GM10248 (cell line): ENCODE measurements at regions of chr6 and their contacts with region 1.

Region 1: GRCh38 chr6:110528101-110528929 is 51.9 kb upstream of the SLC22A16 start:
- DNase-seq: peak; percentile 62
- CTCF ChIP-seq: peak; percentile 75

Region 2: GRCh38 chr6:110561008-110561396 is 32.7 kb after region 1 on chr6:
- CTCF ChIA-PET with region 1: no interaction called
- POLR2A ChIA-PET with region 1: no interaction called
- DNase-seq: no peak
- CTCF ChIP-seq: no peak

Region 3: GRCh38 chr6:110949679-110950285 is 421.5 kb after region 1 on chr6:
- CTCF ChIA-PET with region 1: interaction called, 37 read pairs
- POLR2A ChIA-PET with region 1: no interaction called
- DNase-seq: no peak
- CTCF ChIP-seq: peak; percentile 41

Region 4: GRCh38 chr6:110981202-110981600 is 452.9 kb after region 1 on chr6:
- CTCF ChIA-PET with region 1: interaction called, 10 read pairs
- POLR2A ChIA-PET with region 1: no interaction called
- DNase-seq: no peak
- CTCF ChIP-seq: no peak